Activated CD4-positive, alpha-beta memory T cell treated with anti-CD3 and anti-CD28 coated beads for 36 hours (primary cell): ENCODE measurements at regions of chr1 and their contacts with region 1.

Region 1: GRCh38 chr1:206912445-206913095 is 9.2 kb downstream of the FCMR start:
- DNase-seq: peak; percentile 75
- H3K4me3 Mint-ChIP-seq: no peak overlapping the region
- H3K27ac Mint-ChIP-seq: peak overlapping the region; percentile 19
- H3K4me1 Mint-ChIP-seq: peaks cover 87% of the 10 kb centered on the region
- H3K27me3 Mint-ChIP-seq: no peaks in the 10 kb centered on the region

Region 2: DNA sequence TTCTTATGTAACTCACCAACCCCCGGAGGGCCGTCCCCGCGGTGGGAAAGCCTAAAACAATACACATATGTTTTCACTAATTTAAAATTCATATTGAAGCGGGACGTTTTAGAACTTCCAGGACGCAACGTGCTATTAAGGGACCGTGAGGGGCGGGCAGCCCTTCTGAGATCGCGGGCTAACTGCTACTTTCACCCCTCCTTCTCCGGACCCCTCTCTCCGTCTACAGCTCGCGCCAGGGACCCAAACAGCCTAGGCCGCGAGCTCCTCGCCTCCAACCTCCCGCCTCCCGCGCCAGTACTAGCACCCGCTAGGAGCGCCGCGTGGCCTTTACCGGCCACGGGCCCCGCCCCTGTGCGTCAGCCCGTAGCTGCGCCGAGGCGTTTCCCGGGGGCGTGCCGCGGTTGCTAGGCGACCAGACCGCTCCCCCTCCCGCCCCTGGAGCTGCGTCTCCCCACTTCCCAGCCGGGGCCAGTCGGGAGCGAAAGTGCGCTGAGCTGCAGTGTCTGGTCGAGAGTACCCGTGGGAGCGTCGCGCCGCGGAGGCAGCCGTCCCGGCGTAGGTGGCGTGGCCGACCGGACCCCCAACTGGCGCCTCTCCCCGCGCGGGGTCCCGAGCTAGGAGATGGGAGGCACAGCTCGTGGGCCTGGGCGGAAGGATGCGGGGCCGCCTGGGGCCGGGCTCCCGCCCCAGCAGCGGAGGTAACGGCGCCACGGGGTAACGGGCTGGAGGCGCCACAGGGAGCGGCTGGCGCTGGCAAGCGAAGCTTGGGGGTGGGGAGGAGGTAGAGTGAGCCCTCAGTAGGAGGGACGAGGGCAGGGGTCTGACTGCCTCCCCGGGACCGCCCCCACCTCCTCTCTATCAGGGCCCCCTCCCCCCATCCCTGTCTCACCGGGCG is 277.2 kb before region 1 on chr1 and contains the start of gene DYRK3:
- CTCF ChIA-PET with region 1: interaction called, 28 read pairs
- POLR2A ChIA-PET with region 1: no interaction called
- intact Hi-C with region 1: no loop called
- DNase-seq: peak; percentile 96
- H3K4me3 Mint-ChIP-seq: peak within 1 kb of the TSS; percentile 80
- H3K27ac Mint-ChIP-seq: peak within 1 kb of the TSS; percentile 80
- H3K4me1 Mint-ChIP-seq: peaks cover 25% of the 10 kb centered on the region
- H3K27me3 Mint-ChIP-seq: peaks cover 5% of the 10 kb centered on the region
- total RNA-seq, gene DYRK3: 10.1 to 11.4 TPM

Region 3: DNA sequence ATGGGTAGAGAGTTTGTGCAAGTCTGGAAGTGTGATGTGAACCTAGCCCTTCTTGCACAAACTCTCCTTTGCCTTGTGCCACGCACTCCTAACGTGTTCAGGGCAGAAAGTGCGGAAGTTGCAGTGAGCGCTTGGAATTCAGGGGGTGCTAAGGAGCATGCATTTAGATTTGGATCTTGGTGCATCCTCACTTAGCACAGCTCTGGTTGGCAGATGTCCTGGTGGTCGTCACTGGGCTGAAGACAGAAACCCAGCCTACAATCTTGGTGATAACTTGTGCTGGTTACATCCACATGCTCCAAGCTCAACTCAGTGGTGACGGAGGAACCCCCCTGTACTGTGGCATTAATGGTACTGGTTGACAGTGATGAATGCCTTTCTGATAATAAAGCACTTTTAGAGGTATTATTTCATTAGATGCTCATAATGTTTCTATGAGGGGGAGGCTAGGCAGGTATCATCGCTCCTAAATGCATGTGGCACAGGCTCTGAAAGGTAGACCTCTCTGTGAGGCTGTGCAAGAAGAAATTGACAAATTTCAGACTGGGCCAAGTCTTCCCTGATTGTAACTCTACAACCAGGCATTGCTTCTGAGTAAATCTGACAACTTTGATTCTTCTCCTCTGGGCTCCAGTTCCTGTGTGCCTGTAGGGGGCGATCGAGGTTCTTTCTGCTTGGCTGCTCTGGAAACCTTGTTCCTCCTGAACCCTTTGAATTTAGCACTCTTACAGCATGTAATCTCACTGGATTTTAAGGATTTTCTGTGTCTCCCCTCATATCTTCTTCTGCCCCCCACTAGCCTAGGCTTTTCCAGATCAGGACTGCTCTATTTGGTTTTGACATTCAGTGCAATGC is 187.2 kb before region 1 on chr1:
- CTCF ChIA-PET with region 1: interaction called, 190 read pairs
- POLR2A ChIA-PET with region 1: no interaction called
- intact Hi-C with region 1: loop called (anchors 1 kb)
- DNase-seq: peak; percentile 77
- H3K4me3 Mint-ChIP-seq: no peak overlapping the region
- H3K27ac Mint-ChIP-seq: peak overlapping the region; percentile 33
- H3K4me1 Mint-ChIP-seq: peaks cover 50% of the 10 kb centered on the region
- H3K27me3 Mint-ChIP-seq: no peaks in the 10 kb centered on the region

Region 4: GRCh38 chr1:206803221-206803730 is 109.3 kb before region 1 on chr1:
- CTCF ChIA-PET with region 1: interaction called, 39 read pairs
- POLR2A ChIA-PET with region 1: interaction called, 4 read pairs
- intact Hi-C with region 1: no loop called
- DNase-seq: peak; percentile 89
- H3K4me3 Mint-ChIP-seq: peak overlapping the region; percentile 35
- H3K27ac Mint-ChIP-seq: peak overlapping the region; percentile 66
- H3K4me1 Mint-ChIP-seq: peaks cover 79% of the 10 kb centered on the region
- H3K27me3 Mint-ChIP-seq: peaks cover 13% of the 10 kb centered on the region

Region 5: DNA sequence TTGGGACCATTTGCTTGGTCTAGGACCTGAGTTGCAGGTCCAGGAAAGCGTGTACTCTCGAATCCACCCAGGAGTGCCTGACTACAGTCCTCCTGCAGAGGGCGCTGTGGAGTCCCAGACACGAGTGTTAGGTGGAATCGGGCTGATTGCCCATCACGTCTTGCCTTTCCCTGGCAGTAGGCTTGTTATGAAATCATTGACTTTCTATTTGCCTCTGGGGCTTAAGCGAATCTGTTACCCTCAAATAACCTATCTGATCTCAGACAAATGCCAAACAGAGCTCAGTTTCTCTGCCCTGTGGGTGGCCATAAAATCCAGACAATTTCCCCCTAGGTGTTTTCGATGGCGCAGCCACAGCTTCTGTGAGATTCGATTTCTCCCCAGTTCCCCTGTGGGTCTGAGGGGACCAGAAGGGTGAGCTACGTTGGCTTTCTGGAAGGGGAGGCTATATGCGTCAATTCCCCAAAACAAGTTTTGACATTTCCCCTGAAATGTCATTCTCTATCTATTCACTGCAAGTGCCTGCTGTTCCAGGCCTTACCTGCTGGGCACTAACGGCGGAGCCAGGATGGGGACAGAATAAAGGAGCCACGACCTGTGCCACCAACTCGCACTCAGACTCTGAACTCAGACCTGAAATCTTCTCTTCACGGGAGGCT is 47.4 kb before region 1 on chr1 and contains the start of gene IL20:
- CTCF ChIA-PET with region 1: interaction called, 71 read pairs
- POLR2A ChIA-PET with region 1: no interaction called
- intact Hi-C with region 1: loop called (anchors 1 kb)
- DNase-seq: peak; percentile 93
- H3K4me3 Mint-ChIP-seq: no peak within 1 kb of the TSS
- H3K27ac Mint-ChIP-seq: no peak within 1 kb of the TSS
- H3K4me1 Mint-ChIP-seq: peaks cover 16% of the 10 kb centered on the region
- H3K27me3 Mint-ChIP-seq: peaks cover 10% of the 10 kb centered on the region
- total RNA-seq, gene IL20: not detected

Region 6: GRCh38 chr1:206925106-206925736 is 12.7 kb after region 1 on chr1:
- CTCF ChIA-PET with region 1: interaction called, 201 read pairs
- POLR2A ChIA-PET with region 1: interaction called, 5 read pairs
- intact Hi-C with region 1: loop called (anchors 1 kb)
- DNase-seq: peak; percentile 82
- H3K4me3 Mint-ChIP-seq: no peak overlapping the region
- H3K27ac Mint-ChIP-seq: no peak overlapping the region
- H3K4me1 Mint-ChIP-seq: peaks cover 33% of the 10 kb centered on the region
- H3K27me3 Mint-ChIP-seq: no peaks in the 10 kb centered on the region